PC-3 (cell line): ENCODE measurements at regions of chr3 and their contacts with region 1.

Region 1: GRCh38 chr3:111585214-111585613 is 9.9 kb downstream of the ZBED2 start:
- DNase-seq: peak; percentile 98
- ATAC-seq: peak; percentile 58
- H3K4me3 ChIP-seq: no peak overlapping the region; the same call in 1 of the 2 replicates
- H3K27ac ChIP-seq: peak overlapping the region; percentile 77
- H3K4me1 ChIP-seq: peaks cover 62% of the 10 kb centered on the region
- H3K27me3 ChIP-seq: no peaks in the 10 kb centered on the region
- CTCF ChIP-seq: no peak

Region 2: DNA sequence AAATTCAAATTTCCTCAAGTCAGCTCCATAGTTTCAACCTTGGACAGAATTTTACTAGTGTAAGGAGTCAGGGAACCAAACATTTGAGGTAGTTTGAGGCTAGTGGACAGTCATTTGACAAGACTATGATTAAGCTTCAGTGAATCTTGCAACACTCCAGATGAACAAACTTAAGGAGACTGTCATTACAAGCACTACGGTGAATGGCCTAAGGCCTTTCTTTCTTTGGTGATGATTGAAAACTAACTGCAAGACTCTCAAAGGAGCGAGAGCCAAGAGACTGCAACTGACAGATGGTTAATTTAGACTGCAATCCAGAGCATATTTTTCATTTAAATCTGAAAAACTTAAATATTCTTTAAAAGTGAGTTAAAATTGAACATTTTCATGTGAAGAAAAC is 785.9 kb before region 1 on chr3:
- CTCF ChIA-PET with region 1: no interaction called
- POLR2A ChIA-PET with region 1: no interaction called
- intact Hi-C with region 1: no loop called
- DNase-seq: peak; percentile 19
- ATAC-seq: no peak
- H3K4me3 ChIP-seq: no peak overlapping the region
- H3K27ac ChIP-seq: no peak overlapping the region
- H3K4me1 ChIP-seq: no peaks in the 10 kb centered on the region
- H3K27me3 ChIP-seq: no peaks in the 10 kb centered on the region
- CTCF ChIP-seq: no peak

Region 3: DNA sequence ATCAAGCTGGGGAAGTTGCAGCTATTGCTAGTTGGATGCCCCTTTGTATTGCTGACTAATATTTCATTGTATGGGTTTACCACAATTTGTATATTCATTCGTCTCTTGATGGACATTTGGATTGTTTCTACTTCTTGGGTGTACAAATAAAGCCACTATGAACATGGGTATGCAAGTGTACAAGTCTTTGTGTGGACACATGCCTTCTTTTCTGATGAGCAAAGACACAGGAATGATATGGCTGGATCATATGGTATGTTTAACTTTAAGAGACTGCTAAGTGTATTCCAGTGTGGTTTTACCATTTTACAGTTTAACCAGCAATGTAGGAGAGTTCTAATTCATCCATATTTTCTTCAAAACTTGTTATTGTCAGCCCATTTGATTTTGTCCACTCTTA is 481.4 kb before region 1 on chr3:
- CTCF ChIA-PET with region 1: no interaction called
- POLR2A ChIA-PET with region 1: no interaction called
- intact Hi-C with region 1: no loop called
- DNase-seq: peak; percentile 17
- ATAC-seq: peak; percentile 20; the same call in 1 of the 2 replicates
- H3K4me3 ChIP-seq: no peak overlapping the region
- H3K27ac ChIP-seq: no peak overlapping the region
- H3K4me1 ChIP-seq: no peaks in the 10 kb centered on the region
- H3K27me3 ChIP-seq: no peaks in the 10 kb centered on the region
- CTCF ChIP-seq: no peak

Region 4: DNA sequence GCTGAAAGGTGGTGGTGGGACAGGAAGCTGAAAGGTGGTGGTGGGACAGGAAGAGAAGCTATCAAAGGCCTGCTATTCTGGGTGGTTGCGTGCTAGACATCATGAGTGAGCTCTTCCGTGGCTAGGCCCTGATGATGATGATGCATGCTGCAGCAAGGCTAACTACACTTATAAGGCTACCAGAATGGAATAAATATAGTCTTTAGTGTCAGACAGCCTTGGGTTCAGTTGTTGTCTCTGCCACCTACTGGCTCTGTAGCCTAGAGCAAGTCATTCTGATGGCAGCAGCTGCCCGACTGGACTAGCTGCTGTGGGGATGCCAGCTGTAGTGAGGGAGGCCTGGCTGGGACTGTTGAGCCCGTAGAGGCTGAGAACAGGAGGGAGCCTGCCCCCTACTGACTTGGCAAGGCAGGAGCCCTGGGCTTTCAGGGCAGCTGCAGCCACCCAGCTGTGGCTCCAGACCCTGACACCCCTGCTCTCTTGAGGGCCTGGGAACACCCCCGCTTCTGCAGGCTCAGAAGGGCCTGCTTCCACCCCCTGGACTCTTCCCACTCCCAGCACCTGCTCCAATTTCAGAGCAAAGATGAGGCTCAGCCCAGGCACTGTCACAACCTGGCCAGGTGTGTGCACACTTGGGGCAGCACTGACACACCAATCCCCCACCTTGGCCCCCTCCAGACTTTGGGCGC is 31.3 kb after region 1 on chr3:
- CTCF ChIA-PET with region 1: interaction called, 4 read pairs
- POLR2A ChIA-PET with region 1: no interaction called
- intact Hi-C with region 1: loop called (anchors 2 kb)
- DNase-seq: peak; percentile 62
- ATAC-seq: peak; percentile 12; the same call in 1 of the 2 replicates
- H3K4me3 ChIP-seq: no peak overlapping the region
- H3K27ac ChIP-seq: no peak overlapping the region
- H3K4me1 ChIP-seq: peaks cover 20% of the 10 kb centered on the region
- H3K27me3 ChIP-seq: no peaks in the 10 kb centered on the region
- CTCF ChIP-seq: peak; percentile 58

Region 5: DNA sequence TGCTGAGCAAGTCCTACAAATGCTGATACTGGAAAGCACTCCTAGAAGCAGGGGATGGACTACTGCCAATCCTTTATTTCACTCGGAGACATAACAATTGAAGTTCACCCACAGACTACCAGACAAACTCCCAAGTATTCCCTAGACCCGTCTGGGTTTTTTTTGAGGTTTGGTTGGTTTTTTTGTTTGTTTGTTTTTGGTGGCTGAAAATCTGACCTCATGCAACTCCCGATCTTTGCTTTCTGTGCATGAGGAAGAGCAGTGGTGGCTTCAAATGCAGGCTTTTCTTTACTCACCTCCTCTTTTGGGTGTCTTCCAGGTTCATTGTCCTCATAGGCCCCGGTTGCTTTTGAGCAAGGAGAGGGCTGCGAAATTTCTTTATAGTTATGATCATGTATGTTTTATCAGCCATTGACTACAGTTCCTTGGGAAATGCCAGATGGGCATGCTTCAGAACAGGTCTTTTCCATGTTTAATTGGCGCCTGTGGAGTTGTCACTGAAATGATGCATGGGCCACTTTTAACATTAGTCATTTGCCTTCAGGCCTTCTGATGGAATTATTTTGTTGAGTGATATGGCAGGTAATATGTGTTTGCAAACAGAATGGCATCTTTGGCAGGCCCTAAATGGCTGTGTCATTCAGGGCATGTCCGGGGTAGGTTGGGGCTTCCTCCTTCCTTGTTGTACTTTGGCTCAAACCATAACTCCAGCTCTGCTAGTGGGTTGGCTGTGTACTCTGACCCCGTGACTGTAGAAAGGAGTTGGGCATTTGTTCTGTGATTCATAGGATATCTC is 91.2 kb after region 1 on chr3:
- CTCF ChIA-PET with region 1: no interaction called
- POLR2A ChIA-PET with region 1: no interaction called
- intact Hi-C with region 1: loop called (anchors 1 kb)
- DNase-seq: peak; percentile 99
- ATAC-seq: peak; percentile 76
- H3K4me3 ChIP-seq: peak overlapping the region; percentile 87
- H3K27ac ChIP-seq: peak overlapping the region; percentile 86
- H3K4me1 ChIP-seq: peaks cover 53% of the 10 kb centered on the region
- H3K27me3 ChIP-seq: no peaks in the 10 kb centered on the region
- CTCF ChIP-seq: no peak

Region 6: DNA sequence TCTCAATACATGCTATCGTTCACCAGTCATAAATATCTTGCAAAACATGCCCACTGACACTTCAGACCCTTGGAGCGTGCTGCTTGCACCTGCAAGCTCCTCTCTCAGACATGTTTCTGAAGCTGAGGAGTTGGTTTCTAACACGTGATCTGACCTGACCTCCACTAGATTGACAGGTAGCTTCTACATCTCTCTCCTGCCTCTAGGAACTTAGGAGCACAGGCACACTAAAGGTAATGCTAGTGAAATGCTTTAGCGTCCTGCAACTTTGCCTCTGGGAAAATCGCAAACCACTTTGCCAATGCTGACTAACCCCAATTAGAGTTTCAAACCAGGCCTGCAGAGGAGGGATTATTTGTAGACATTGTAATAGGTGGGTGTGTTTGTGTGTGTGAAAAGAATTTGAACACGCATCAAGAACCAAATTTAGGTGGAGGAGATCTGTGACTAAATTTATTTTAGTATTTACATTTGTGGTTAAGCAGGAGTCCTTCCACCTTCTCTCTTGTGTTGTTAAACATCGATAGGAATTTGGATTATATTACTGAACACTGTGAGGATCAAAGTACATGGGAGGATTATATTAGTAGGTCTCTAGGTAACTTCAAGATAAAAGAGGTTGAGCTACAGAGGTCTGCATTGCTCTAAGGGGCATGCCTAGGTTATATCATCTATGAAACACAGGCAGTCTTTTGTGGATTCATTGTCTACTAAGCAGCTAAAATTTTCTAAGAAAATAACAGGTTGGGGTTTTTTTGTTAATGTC is 96.6 kb after region 1 on chr3:
- CTCF ChIA-PET with region 1: no interaction called
- POLR2A ChIA-PET with region 1: interaction called, 12 read pairs
- intact Hi-C with region 1: no loop called
- DNase-seq: peak; percentile 90
- ATAC-seq: peak; percentile 80
- H3K4me3 ChIP-seq: 0 out of 2 replicates have a peak overlapping the region, but pooled peaks have one; percentile 6
- H3K27ac ChIP-seq: peak overlapping the region; percentile 53
- H3K4me1 ChIP-seq: peaks cover 51% of the 10 kb centered on the region
- H3K27me3 ChIP-seq: no peaks in the 10 kb centered on the region
- CTCF ChIP-seq: no peak